CD4-positive, alpha-beta T cell (primary cell): ENCODE measurements at regions of chr11 and their contacts with region 1.

Region 1: GRCh38 chr11:29093416-29094120 is 923.3 kb downstream of the KCNA4 start:
- DNase-seq: no peak
- ATAC-seq: no peak
- H3K4me3 ChIP-seq: no peak overlapping the region
- H3K4me3 Mint-ChIP-seq: no peak overlapping the region
- H3K27ac ChIP-seq: no peak overlapping the region
- H3K27ac Mint-ChIP-seq: no peak overlapping the region
- H3K4me1 ChIP-seq: no peaks in the 10 kb centered on the region
- H3K4me1 Mint-ChIP-seq: no peaks in the 10 kb centered on the region
- H3K27me3 ChIP-seq: no peaks in the 10 kb centered on the region
- H3K27me3 Mint-ChIP-seq: no peaks in the 10 kb centered on the region
- CTCF ChIP-seq: no peak

Region 2: GRCh38 chr11:29119707-29120695 is 26.4 kb after region 1 on chr11:
- CTCF ChIA-PET with region 1: no interaction called
- POLR2A ChIA-PET with region 1: no interaction called
- intact Hi-C with region 1: no loop called
- DNase-seq: no peak
- ATAC-seq: no peak
- H3K4me3 ChIP-seq: no peak overlapping the region
- H3K4me3 Mint-ChIP-seq: no peak overlapping the region
- H3K27ac ChIP-seq: no peak overlapping the region
- H3K27ac Mint-ChIP-seq: no peak overlapping the region
- H3K4me1 ChIP-seq: no peaks in the 10 kb centered on the region
- H3K4me1 Mint-ChIP-seq: no peaks in the 10 kb centered on the region
- H3K27me3 ChIP-seq: no peaks in the 10 kb centered on the region
- H3K27me3 Mint-ChIP-seq: no peaks in the 10 kb centered on the region
- CTCF ChIP-seq: no peak

Region 3: DNA sequence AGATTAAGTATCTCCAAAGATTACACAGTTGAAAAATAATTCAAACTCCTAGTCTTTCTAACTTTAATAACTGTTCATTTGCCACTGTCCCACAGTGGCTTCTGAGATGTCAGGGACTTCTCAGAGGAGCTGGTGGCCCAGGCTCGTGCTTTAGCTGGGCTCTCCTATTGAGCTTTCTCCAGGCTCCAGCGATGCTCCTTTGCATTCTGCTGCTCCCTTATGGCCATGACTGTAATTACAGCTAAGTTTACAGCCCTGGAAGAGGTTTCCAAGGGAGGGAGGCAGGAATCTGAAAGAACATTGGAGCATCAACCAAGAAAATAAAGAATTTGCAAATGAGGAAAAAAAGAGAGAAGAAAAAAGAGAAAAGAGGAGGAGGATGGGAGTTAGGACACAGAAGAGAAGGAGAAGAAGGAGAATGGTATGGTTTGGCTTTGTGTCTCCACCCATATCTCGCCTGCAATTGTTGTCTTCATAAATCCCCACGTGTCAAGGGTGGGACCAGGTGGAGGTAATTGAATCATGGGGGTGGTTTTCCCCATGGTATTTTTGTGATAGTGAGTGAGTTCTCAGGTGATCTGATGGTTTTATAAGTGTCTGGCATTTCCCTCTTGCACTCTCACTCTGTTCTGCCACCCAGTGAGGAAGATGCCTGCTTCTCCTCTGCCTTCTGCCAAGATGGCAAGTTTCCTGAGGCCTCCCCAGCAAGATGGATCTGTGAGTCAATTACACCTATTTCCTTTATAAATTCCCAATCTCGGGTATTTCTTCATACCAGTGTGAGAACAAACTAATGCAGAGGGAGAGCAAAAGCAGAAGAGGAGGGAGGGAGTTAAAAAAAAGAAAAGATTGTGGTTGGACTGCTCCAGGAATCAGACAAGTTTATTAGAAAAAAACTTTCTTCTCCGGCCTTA is 66.2 kb after region 1 on chr11:
- CTCF ChIA-PET with region 1: no interaction called
- POLR2A ChIA-PET with region 1: no interaction called
- intact Hi-C with region 1: loop called in 1 of 2 experiments (anchors 10 kb)
- DNase-seq: no peak
- ATAC-seq: no peak
- H3K4me3 ChIP-seq: no peak overlapping the region
- H3K4me3 Mint-ChIP-seq: no peak overlapping the region
- H3K27ac ChIP-seq: no peak overlapping the region
- H3K27ac Mint-ChIP-seq: no peak overlapping the region
- H3K4me1 ChIP-seq: no peaks in the 10 kb centered on the region
- H3K4me1 Mint-ChIP-seq: no peaks in the 10 kb centered on the region
- H3K27me3 ChIP-seq: no peaks in the 10 kb centered on the region
- H3K27me3 Mint-ChIP-seq: no peaks in the 10 kb centered on the region
- CTCF ChIP-seq: no peak

Region 4: DNA sequence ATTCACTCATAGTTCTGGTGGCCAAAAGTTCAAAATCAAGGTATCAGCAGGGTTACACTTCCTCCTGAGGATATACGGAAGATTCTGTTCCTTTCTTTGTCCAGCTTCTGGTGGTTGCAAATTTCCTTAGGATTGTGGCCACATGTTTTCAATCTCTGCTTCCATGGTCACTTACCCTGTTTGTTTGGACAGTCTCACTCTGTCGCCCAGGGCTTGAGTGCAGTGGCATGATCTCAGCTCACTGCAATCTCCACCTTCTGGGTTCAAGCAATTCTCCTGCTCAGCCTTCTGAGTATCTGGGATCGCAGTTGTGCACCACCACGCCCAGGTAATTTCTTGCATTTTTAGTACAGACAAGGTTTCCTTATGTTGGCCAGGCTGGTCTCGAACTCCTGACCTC is 389.0 kb after region 1 on chr11:
- CTCF ChIA-PET with region 1: no interaction called
- POLR2A ChIA-PET with region 1: no interaction called
- intact Hi-C with region 1: no loop called
- DNase-seq: no peak
- ATAC-seq: no peak
- H3K4me3 ChIP-seq: no peak overlapping the region
- H3K4me3 Mint-ChIP-seq: no peak overlapping the region
- H3K27ac ChIP-seq: no peak overlapping the region
- H3K27ac Mint-ChIP-seq: no peak overlapping the region
- H3K4me1 ChIP-seq: no peaks in the 10 kb centered on the region
- H3K4me1 Mint-ChIP-seq: no peaks in the 10 kb centered on the region
- H3K27me3 ChIP-seq: no peaks in the 10 kb centered on the region
- H3K27me3 Mint-ChIP-seq: no peaks in the 10 kb centered on the region
- CTCF ChIP-seq: no peak

Region 5: DNA sequence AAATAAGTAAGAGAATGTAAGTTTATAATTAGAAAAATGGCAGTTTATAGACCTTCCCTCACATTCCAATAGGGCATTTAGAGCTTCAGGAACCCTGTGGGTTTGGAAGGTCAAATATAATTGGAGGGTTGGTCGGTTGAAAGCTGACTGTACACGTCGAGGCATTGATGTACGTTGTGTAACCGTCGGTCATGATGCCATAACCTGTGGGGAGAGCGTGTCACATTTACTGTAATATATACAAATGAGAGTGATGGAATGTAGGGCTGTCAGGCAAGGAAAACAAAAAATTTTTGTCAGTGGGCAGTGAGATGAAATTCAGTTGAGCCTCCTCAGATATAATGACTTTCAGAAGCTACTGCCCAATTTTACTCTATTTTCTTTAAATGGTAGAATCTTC is 1317.8 kb after region 1 on chr11:
- CTCF ChIA-PET with region 1: no interaction called
- POLR2A ChIA-PET with region 1: no interaction called
- intact Hi-C with region 1: no loop called
- DNase-seq: no peak
- ATAC-seq: no peak
- H3K4me3 ChIP-seq: no peak overlapping the region
- H3K4me3 Mint-ChIP-seq: no peak overlapping the region
- H3K27ac ChIP-seq: no peak overlapping the region
- H3K27ac Mint-ChIP-seq: no peak overlapping the region
- H3K4me1 ChIP-seq: no peaks in the 10 kb centered on the region
- H3K4me1 Mint-ChIP-seq: no peaks in the 10 kb centered on the region
- H3K27me3 ChIP-seq: no peaks in the 10 kb centered on the region
- H3K27me3 Mint-ChIP-seq: no peaks in the 10 kb centered on the region
- CTCF ChIP-seq: no peak